ENCODE measurements at regions of chr4 and their contacts with region 1.

Region 1: GRCh38 chr4:140153718-140154571 is at the start of gene MAML3:
- DNase-seq: peak; percentile 95 to 97
- H3K4me3 ChIP-seq: peak within 1 kb of the TSS; percentile 85 to 91 (median 89)
- H3K27ac ChIP-seq: peak within 1 kb of the TSS; percentile 98 to 100 (median 98)
- H3K4me1 ChIP-seq: peaks cover 0 to 3% of the 10 kb centered on the region in 2 donors
- H3K27me3 ChIP-seq: no peaks in the 10 kb centered on the region
- CTCF ChIP-seq: peak in 1 of 6 experiments; percentile 2
- POLR2A ChIP-seq: peak; percentile 52 to 95
- total RNA-seq, gene MAML3: 5.7 to 14.1 (median 11.4) TPM

Region 2: GRCh38 chr4:139734875-139735380 is 419.0 kb before region 1 on chr4:
- intact Hi-C with region 1: loop called (anchors 5 kb)
- DNase-seq: peak; percentile 92 to 93
- H3K4me3 ChIP-seq: peak overlapping the region; percentile 3 to 50 (median 49)
- H3K27ac ChIP-seq: peak overlapping the region; percentile 48 to 84 (median 72)
- H3K4me1 ChIP-seq: peaks cover 13 to 24% of the 10 kb centered on the region in 2 donors
- H3K27me3 ChIP-seq: no peaks in the 10 kb centered on the region
- CTCF ChIP-seq: peak; percentile 61 to 95 (median 81)
- POLR2A ChIP-seq: peak in 1 of 2 donors; percentile 46

Region 3: DNA sequence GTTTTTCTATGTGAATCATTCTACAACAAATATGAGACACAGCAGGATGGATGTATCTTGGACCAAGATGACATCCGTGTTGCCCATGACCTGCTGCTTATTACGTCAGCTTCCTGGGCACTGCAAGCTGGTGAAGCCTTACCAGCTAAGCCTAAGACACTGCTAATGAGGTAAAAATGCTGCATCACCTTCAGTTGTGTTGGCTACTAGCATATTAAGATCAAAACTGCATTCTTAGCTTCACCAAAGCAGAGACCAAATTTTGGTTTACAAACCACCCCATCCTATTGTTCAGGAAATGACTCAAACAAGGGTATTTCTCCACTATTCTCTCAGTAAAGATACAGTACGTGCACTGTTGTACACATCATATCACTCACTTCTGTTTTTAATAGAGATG is 50.3 kb before region 1 on chr4:
- intact Hi-C with region 1: no loop called
- DNase-seq: no peak
- H3K4me3 ChIP-seq: no peak overlapping the region
- H3K27ac ChIP-seq: no peak overlapping the region
- H3K4me1 ChIP-seq: peaks cover 0 to 11% of the 10 kb centered on the region in 2 donors
- H3K27me3 ChIP-seq: no peaks in the 10 kb centered on the region
- CTCF ChIP-seq: no peak
- POLR2A ChIP-seq: no peak

Region 4: DNA sequence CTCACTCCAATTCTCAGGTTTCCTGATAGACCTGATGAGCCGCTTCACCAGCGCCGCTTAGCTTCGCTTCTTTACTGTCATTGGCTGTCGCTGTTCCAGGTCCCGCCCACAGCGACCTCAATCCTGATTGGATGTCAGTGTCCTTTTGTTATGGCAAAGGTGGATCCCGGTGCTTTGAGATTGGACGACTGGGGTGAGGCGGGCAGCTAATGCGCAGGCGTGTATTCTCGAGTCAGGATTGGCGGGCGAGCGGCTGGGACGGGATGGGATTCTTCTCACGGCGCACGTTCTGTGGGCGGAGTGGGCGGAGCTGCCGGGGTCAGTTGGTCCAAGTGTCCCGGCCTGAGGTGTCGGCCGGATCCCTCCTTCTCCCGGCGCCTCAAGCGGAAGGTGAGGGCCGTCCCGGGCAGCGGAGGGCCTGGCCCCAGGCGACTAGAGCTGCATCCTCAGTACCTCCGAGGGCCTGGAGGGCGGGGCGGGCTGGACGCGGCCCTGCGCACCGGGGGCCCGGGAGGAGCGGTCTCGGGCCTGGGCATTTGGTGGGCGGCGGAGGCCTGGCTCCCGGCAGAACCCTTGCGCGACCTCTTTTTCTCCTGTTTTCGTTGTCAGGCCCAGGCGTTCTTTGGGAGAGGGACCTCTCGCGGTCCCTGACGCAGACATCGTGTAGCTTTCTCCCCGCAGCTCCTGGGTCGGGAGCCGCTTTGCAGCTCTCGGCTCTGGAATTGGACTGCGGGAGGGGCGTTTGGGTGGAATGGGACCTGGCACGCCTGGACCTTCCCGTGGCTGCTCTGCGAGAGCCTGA is 219.6 kb after region 1 on chr4 and contains the start of gene SCOC:
- intact Hi-C with region 1: loop called (anchors 10 kb)
- DNase-seq: peak; percentile 100
- H3K4me3 ChIP-seq: peak within 1 kb of the TSS; percentile 41 to 84 (median 57)
- H3K27ac ChIP-seq: peak within 1 kb of the TSS; percentile 60 to 89 (median 72)
- H3K4me1 ChIP-seq: peaks cover 9 to 14% of the 10 kb centered on the region in 2 donors
- H3K27me3 ChIP-seq: no peaks in the 10 kb centered on the region
- CTCF ChIP-seq: peak in 1 of 6 experiments; percentile 11
- POLR2A ChIP-seq: peak in 1 of 2 donors; percentile 85
- total RNA-seq, gene SCOC: 62.0 to 71.4 (median 66.0) TPM